ENCODE measurements at regions of chr15 and their contacts with region 1.

Region 1: GRCh38 chr15:40274350-40275274 is 8.3 kb downstream of the ANKRD63 start:
- DNase-seq: peak; percentile 36 to 64
- ATAC-seq: peak; percentile 75 to 76
- H3K4me3 ChIP-seq: no peak overlapping the region
- H3K27ac ChIP-seq: no peak overlapping the region
- H3K4me1 ChIP-seq: peaks cover 2% of the 10 kb centered on the region in 2 donors
- H3K27me3 ChIP-seq: peaks cover 7 to 15% (median 10%) of the 10 kb centered on the region in 3 donors
- CTCF ChIP-seq: peak; percentile 99 to 100 (median 100)
- POLR2A ChIP-seq: no peak

Region 2: GRCh38 chr15:40217159-40217824 is 57.3 kb before region 1 on chr15:
- in situ Hi-C with region 1: loop called (anchors 5 kb)
- intact Hi-C with region 1: loop called (anchors 1 kb)
- DNase-seq: no peak
- ATAC-seq: peak; percentile 89 to 99
- H3K4me3 ChIP-seq: no peak overlapping the region
- H3K27ac ChIP-seq: no peak overlapping the region
- H3K4me1 ChIP-seq: no peaks in the 10 kb centered on the region
- H3K27me3 ChIP-seq: no peaks in the 10 kb centered on the region
- CTCF ChIP-seq: peak; percentile 69 to 86 (median 80)
- POLR2A ChIP-seq: no peak

Region 3: GRCh38 chr15:40226736-40227135 is 47.9 kb before region 1 on chr15:
- in situ Hi-C with region 1: loop called in 1 of 4 experiments (anchors 5 kb)
- intact Hi-C with region 1: no loop called
- DNase-seq: no peak
- ATAC-seq: no peak
- H3K4me3 ChIP-seq: no peak overlapping the region
- H3K27ac ChIP-seq: no peak overlapping the region
- H3K4me1 ChIP-seq: no peaks in the 10 kb centered on the region
- H3K27me3 ChIP-seq: no peaks in the 10 kb centered on the region
- CTCF ChIP-seq: no peak
- POLR2A ChIP-seq: no peak

Region 4: GRCh38 chr15:40310001-40310959 is 35.7 kb after region 1 on chr15:
- in situ Hi-C with region 1: no loop called
- intact Hi-C with region 1: loop called (anchors 1 kb)
- DNase-seq: no peak
- ATAC-seq: peak in 1 of 2 donors; percentile 47
- H3K4me3 ChIP-seq: no peak overlapping the region
- H3K27ac ChIP-seq: no peak overlapping the region
- H3K4me1 ChIP-seq: peaks cover 0 to 8% of the 10 kb centered on the region in 2 donors
- H3K27me3 ChIP-seq: no peaks in the 10 kb centered on the region
- CTCF ChIP-seq: peak; percentile 11 to 65 (median 57)
- POLR2A ChIP-seq: no peak

Region 5: DNA sequence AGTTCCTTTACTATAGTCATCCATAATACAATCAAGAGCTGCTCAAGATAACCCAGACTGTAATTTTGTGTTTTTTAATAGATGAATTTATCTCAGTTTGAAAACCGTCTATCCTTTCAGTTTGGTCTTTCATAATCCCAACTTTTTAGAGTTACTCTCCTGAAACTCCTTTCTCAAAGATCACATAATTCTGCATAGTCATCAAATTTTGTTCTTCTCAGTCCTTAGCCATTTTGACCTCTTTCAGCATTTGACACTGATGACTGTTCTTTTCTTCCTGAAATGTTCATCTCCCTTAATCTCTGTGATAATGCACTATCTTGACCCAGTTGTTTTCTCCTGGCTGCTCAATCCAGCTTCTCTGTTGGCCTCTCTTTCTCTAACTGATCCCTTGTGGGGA is 372.9 kb after region 1 on chr15:
- in situ Hi-C with region 1: no loop called
- intact Hi-C with region 1: no loop called
- DNase-seq: no peak
- ATAC-seq: no peak
- H3K4me3 ChIP-seq: no peak overlapping the region
- H3K27ac ChIP-seq: no peak overlapping the region
- H3K4me1 ChIP-seq: no peaks in the 10 kb centered on the region
- H3K27me3 ChIP-seq: no peaks in the 10 kb centered on the region
- CTCF ChIP-seq: no peak
- POLR2A ChIP-seq: no peak